CD4-positive, alpha-beta T cell (primary cell): ENCODE measurements at regions of chr4 and their contacts with region 1.

Region 1: DNA sequence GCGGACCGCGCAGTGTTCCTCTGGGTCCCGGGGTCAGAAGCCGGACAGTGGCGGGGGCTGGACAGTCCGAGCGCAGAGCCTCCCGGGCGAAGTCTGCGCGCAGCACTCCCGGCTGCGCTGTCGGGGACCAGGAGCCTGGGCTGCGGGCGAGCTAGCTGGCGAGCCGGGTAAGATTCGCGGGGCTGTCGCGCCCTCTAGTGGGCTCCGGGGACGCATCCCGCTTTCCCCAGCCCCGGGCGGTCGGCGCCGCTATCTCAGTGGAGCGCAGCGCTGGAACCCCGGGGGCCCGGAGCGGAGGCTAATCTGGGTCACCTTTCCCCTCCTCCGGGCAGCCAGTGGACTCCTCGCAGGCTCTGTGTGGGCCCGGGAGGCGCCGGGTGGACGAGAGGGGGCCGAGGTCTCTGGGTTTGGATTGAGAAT is 4.2 kb downstream of the PDGFRA start:
- DNase-seq: peak; percentile 36 to 83 (median 62)
- ATAC-seq: peak; percentile 67
- H3K4me3 ChIP-seq: peak overlapping the region; percentile 48
- H3K4me3 Mint-ChIP-seq: peak overlapping the region; percentile 86
- H3K27ac ChIP-seq: no peak overlapping the region
- H3K27ac Mint-ChIP-seq: no peak overlapping the region
- H3K4me1 ChIP-seq: peaks cover 32% of the 10 kb centered on the region
- H3K4me1 Mint-ChIP-seq: peaks cover 20% of the 10 kb centered on the region
- H3K27me3 ChIP-seq: peaks cover 41 to 47% of the 10 kb centered on the region in 2 experiments
- H3K27me3 Mint-ChIP-seq: peaks cover 80% of the 10 kb centered on the region
- CTCF ChIP-seq: peak; percentile 55

Region 2: DNA sequence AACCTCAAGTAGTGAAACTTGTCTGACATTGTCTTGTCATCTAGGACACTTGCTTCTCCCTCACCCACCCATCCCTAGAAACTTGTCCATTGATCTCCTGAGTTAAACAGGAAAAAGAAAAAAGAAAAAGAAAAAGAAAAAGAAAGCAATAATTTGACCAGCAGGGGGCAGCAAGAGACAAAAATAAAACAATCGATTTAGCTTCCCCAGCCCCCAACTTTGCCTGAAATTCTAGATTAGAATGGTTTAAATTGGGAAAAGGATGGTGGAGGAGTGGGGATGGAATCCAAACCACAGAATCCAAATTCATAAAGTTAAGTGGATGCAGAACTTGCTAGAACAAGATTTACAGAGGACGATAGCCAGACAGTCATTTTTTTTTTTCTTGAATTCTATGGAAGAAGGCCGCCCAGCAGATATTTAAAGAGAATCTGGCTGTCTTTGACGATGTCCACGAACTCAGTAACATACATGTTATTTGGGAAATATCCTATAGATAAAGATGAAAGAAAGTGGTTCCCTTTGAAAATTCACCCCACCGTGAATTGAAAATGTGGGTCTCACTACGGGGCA is 1857.1 kb before region 1 on chr4:
- CTCF ChIA-PET with region 1: interaction called, 4 read pairs
- POLR2A ChIA-PET with region 1: no interaction called
- intact Hi-C with region 1: loop called (anchors 1 to 5 kb)
- DNase-seq: peak in 4 of 14 experiments; percentile 24 to 49 (median 38)
- ATAC-seq: no peak
- H3K4me3 ChIP-seq: no peak overlapping the region
- H3K4me3 Mint-ChIP-seq: no peak overlapping the region
- H3K27ac ChIP-seq: no peak overlapping the region
- H3K27ac Mint-ChIP-seq: no peak overlapping the region
- H3K4me1 ChIP-seq: no peaks in the 10 kb centered on the region
- H3K4me1 Mint-ChIP-seq: no peaks in the 10 kb centered on the region
- H3K27me3 ChIP-seq: no peaks in the 10 kb centered on the region
- H3K27me3 Mint-ChIP-seq: peaks cover 39% of the 10 kb centered on the region
- CTCF ChIP-seq: peak; percentile 65

Region 3: GRCh38 chr4:52545099-52546069 is 1687.9 kb before region 1 on chr4:
- CTCF ChIA-PET with region 1: interaction called, 3 read pairs
- POLR2A ChIA-PET with region 1: no interaction called
- intact Hi-C with region 1: loop called (anchors 5 to 10 kb)
- DNase-seq: peak; percentile 24 to 72 (median 48)
- ATAC-seq: no peak
- H3K4me3 ChIP-seq: no peak overlapping the region
- H3K4me3 Mint-ChIP-seq: no peak overlapping the region
- H3K27ac ChIP-seq: no peak overlapping the region
- H3K27ac Mint-ChIP-seq: no peak overlapping the region
- H3K4me1 ChIP-seq: peaks cover 4% of the 10 kb centered on the region
- H3K4me1 Mint-ChIP-seq: no peaks in the 10 kb centered on the region
- H3K27me3 ChIP-seq: peaks cover 0 to 6% of the 10 kb centered on the region in 2 experiments
- H3K27me3 Mint-ChIP-seq: peaks cover 23% of the 10 kb centered on the region
- CTCF ChIP-seq: peak; percentile 73

Region 4: GRCh38 chr4:53196882-53197771 is 1036.2 kb before region 1 on chr4:
- CTCF ChIA-PET with region 1: interaction called, 9 read pairs
- POLR2A ChIA-PET with region 1: no interaction called
- intact Hi-C with region 1: loop called (anchors 1 to 2 kb)
- DNase-seq: peak in 3 of 14 experiments; percentile 64 to 72 (median 71)
- ATAC-seq: no peak
- H3K4me3 ChIP-seq: no peak overlapping the region
- H3K4me3 Mint-ChIP-seq: no peak overlapping the region
- H3K27ac ChIP-seq: no peak overlapping the region
- H3K27ac Mint-ChIP-seq: no peak overlapping the region
- H3K4me1 ChIP-seq: no peaks in the 10 kb centered on the region
- H3K4me1 Mint-ChIP-seq: no peaks in the 10 kb centered on the region
- H3K27me3 ChIP-seq: no peaks in the 10 kb centered on the region
- H3K27me3 Mint-ChIP-seq: no peaks in the 10 kb centered on the region
- CTCF ChIP-seq: peak; percentile 74

Region 5: GRCh38 chr4:53908661-53909078 is 324.6 kb before region 1 on chr4:
- CTCF ChIA-PET with region 1: interaction called, 15 read pairs
- POLR2A ChIA-PET with region 1: interaction called, 3 read pairs
- intact Hi-C with region 1: no loop called
- DNase-seq: peak in 3 of 14 experiments; percentile 37 to 55 (median 53)
- ATAC-seq: no peak
- H3K4me3 ChIP-seq: no peak overlapping the region
- H3K4me3 Mint-ChIP-seq: no peak overlapping the region
- H3K27ac ChIP-seq: no peak overlapping the region
- H3K27ac Mint-ChIP-seq: no peak overlapping the region
- H3K4me1 ChIP-seq: peaks cover 6% of the 10 kb centered on the region
- H3K4me1 Mint-ChIP-seq: peaks cover 7% of the 10 kb centered on the region
- H3K27me3 ChIP-seq: peaks cover 11 to 23% of the 10 kb centered on the region in 2 experiments
- H3K27me3 Mint-ChIP-seq: peaks cover 69% of the 10 kb centered on the region
- CTCF ChIP-seq: peak; percentile 32

Region 6: GRCh38 chr4:53929955-53930798 is 303.1 kb before region 1 on chr4:
- CTCF ChIA-PET with region 1: interaction called, 30 read pairs
- POLR2A ChIA-PET with region 1: interaction called, 3 read pairs
- intact Hi-C with region 1: loop called (anchors 1 kb)
- DNase-seq: peak; percentile 25 to 76 (median 38)
- ATAC-seq: no peak
- H3K4me3 ChIP-seq: no peak overlapping the region
- H3K4me3 Mint-ChIP-seq: no peak overlapping the region
- H3K27ac ChIP-seq: no peak overlapping the region
- H3K27ac Mint-ChIP-seq: no peak overlapping the region
- H3K4me1 ChIP-seq: no peaks in the 10 kb centered on the region
- H3K4me1 Mint-ChIP-seq: no peaks in the 10 kb centered on the region
- H3K27me3 ChIP-seq: peaks cover 0 to 3% of the 10 kb centered on the region in 2 experiments
- H3K27me3 Mint-ChIP-seq: peaks cover 11% of the 10 kb centered on the region
- CTCF ChIP-seq: peak; percentile 79

Region 7: GRCh38 chr4:54289316-54289715 is 56.0 kb after region 1 on chr4:
- CTCF ChIA-PET with region 1: no interaction called
- POLR2A ChIA-PET with region 1: no interaction called
- intact Hi-C with region 1: no loop called
- DNase-seq: no peak
- ATAC-seq: no peak
- H3K4me3 ChIP-seq: no peak overlapping the region
- H3K4me3 Mint-ChIP-seq: no peak overlapping the region
- H3K27ac ChIP-seq: no peak overlapping the region
- H3K27ac Mint-ChIP-seq: no peak overlapping the region
- H3K4me1 ChIP-seq: no peaks in the 10 kb centered on the region
- H3K4me1 Mint-ChIP-seq: no peaks in the 10 kb centered on the region
- H3K27me3 ChIP-seq: peaks cover 0 to 4% of the 10 kb centered on the region in 2 experiments
- H3K27me3 Mint-ChIP-seq: peaks cover 26% of the 10 kb centered on the region
- CTCF ChIP-seq: no peak